HCT116 (cell line): ENCODE measurements at regions of chr5 and their contacts with region 1.

Region 1: GRCh38 chr5:117588621-117589020 is 1014.0 kb upstream of the SEMA6A start:
- DNase-seq: no peak
- ATAC-seq: no peak
- H3K4me3 ChIP-seq: no peak overlapping the region
- H3K27ac ChIP-seq: no peak overlapping the region
- H3K4me1 ChIP-seq: no peaks in the 10 kb centered on the region
- H3K27me3 ChIP-seq: no peaks in the 10 kb centered on the region
- CTCF ChIP-seq: no peak
- POLR2A ChIP-seq: no peak
- RAD21 ChIP-seq: no peak

Region 2: DNA sequence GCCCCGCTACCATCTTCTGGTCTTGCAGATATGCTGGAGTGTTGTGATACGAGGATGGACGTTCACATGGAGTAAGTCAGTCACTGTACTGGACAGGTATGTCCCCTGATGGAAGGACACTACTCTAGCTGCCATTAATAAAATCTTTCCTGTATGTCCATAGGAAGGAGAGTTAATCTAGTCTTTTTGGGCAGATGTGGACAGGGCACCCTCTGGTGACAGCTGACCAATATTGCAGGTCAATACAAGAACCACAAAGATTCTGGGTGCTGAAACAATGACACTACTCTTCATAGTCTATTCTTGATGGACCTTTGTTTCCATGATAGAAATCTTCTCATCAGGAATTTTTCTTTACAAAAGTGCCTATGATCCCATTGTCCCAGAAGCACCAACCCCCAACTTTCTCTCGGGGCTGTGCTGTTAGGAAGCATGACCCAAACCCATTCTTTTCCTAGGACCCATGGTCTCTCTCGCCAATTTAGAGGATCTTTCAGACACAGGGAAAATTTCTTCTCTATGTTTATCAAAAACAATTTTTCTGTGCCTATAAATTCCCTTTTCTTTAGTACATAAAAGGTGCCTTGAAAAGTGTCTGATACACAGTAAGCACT is 1022.8 kb after region 1 on chr5:
- CTCF ChIA-PET with region 1: no interaction called
- POLR2A ChIA-PET with region 1: no interaction called
- RAD21 ChIA-PET with region 1: no interaction called
- intact Hi-C with region 1: loop called (anchors 5 kb)
- DNase-seq: peak; percentile 19
- ATAC-seq: peak; percentile 76
- H3K4me3 ChIP-seq: no peak overlapping the region
- H3K27ac ChIP-seq: no peak overlapping the region
- H3K4me1 ChIP-seq: no peaks in the 10 kb centered on the region
- H3K27me3 ChIP-seq: no peaks in the 10 kb centered on the region
- CTCF ChIP-seq: peak; percentile 48 to 85 (median 78); a peak in 5 of 6 replicates
- POLR2A ChIP-seq: no peak
- RAD21 ChIP-seq: peak; percentile 87

Region 3: GRCh38 chr5:118687661-118688621 is 1099.3 kb after region 1 on chr5:
- CTCF ChIA-PET with region 1: no interaction called
- POLR2A ChIA-PET with region 1: no interaction called
- RAD21 ChIA-PET with region 1: no interaction called
- intact Hi-C with region 1: no loop called
- DNase-seq: no peak
- ATAC-seq: no peak
- H3K4me3 ChIP-seq: no peak overlapping the region
- H3K27ac ChIP-seq: no peak overlapping the region
- H3K4me1 ChIP-seq: no peaks in the 10 kb centered on the region
- H3K27me3 ChIP-seq: no peaks in the 10 kb centered on the region
- CTCF ChIP-seq: no peak
- POLR2A ChIP-seq: no peak
- RAD21 ChIP-seq: no peak